Right ventricle myocardium inferior (tissue), 1 donor: ENCODE measurements at regions of chr10 and their contacts with region 1.

Region 1: GRCh38 chr10:87913156-87913921 is 49.9 kb downstream of the PTEN start:
- DNase-seq: no peak
- ATAC-seq: no peak

Region 2: GRCh38 chr10:87804939-87805569 is 108.3 kb before region 1 on chr10:
- intact Hi-C with region 1: no loop called
- DNase-seq: no peak
- ATAC-seq: no peak

Region 3: DNA sequence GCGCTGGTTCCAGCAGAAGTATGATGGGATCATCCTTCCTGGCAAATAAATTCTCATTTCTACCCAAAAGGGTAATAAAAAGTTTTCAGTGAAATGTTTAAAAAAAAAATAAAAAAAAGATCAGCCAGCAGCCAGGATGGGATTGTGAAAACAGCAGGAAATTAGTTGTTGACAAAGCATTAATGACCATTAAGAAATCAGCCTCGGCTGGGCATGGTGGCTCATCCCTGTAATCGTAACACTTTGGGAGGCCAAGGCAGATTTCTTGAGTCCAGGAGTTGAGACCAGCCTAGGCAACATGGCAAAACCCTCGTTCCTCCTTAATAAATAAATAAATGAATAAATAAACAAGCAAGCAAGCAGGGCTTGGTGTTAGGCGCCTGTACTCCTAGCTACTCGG is 32.6 kb after region 1 on chr10:
- intact Hi-C with region 1: loop called (anchors 5 kb)
- DNase-seq: no peak
- ATAC-seq: no peak

Region 4: DNA sequence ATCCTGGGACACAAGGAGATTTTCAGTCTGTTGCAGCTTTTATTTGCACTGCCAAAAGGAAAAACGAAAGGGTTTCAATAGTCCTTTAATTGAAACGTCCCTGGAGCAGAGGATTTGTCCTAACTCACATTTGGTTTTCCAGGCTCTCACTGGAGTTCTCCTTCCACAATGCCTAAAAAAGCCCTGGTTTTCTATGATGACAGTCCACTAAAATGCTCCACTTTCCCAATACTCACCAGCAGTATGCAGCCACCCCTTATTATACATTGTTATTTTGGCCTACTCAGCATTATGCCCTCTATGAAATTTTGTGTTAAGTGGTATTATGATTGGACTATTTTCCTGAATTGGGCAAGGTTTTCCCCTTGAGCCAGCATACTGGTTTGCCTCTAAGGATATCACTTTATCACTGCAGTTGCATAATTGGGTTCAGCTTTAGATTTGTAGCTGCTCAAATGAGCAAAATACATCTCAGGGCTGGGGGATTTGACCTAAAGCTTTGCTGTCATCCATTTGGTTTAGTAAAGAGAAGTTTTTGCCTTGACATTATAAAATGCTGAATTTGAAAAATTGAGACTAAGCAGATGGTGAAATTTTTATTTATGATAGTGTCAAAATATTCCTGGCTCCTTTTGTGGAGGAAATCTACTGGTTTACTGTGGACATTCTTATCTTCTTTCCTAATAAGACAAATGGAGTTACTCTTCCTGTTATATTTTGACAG is 430.6 kb after region 1 on chr10:
- intact Hi-C with region 1: no loop called
- DNase-seq: no peak
- ATAC-seq: peak; percentile 76